ENCODE measurements at regions of chr10 and their contacts with region 1.

Region 1: DNA sequence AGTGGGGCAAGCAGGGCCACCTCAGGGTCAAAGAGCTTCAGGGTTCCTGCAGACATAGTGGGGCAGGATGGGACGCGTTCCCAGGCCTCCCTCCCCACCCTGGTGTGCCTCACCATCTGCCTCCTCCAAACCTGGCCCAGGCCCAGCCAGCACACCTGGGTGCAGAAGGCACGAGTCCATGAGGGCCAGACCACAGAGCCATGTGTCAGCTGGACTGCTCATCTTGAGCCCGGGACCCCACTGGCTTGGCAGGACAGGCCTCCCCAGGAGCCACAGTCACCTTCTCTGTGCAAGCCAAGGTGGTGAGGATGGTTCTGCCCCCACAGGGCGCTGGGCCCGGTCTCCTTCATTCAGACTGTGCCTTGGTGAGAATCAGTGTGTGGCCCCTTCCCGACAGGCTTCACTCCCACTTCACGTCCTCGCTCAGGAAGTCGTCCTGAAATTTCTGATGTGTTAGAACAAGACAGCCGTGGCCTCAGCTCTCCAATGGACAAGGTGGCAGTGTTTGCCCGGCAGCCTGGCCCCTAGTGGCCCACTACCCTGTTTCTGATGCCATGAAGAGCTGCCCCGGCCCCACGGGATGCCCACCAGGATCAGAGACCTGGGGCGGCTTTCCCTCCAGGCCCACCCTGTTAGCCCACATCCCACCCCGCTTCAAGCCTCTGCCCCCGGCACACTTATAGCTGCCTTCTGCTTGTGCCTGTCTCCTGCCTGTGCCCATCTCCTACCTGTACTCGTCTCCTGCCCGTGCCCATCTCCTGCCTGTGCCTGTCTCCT is 59.6 kb upstream of the EBF3 start:
- DNase-seq: no peak
- H3K4me3 ChIP-seq: no peak overlapping the region
- H3K27ac ChIP-seq: no peak overlapping the region
- H3K4me1 ChIP-seq: no peaks in the 10 kb centered on the region
- H3K27me3 ChIP-seq: no peaks in the 10 kb centered on the region
- CTCF ChIP-seq: no peak
- POLR2A ChIP-seq: no peak

Region 2: DNA sequence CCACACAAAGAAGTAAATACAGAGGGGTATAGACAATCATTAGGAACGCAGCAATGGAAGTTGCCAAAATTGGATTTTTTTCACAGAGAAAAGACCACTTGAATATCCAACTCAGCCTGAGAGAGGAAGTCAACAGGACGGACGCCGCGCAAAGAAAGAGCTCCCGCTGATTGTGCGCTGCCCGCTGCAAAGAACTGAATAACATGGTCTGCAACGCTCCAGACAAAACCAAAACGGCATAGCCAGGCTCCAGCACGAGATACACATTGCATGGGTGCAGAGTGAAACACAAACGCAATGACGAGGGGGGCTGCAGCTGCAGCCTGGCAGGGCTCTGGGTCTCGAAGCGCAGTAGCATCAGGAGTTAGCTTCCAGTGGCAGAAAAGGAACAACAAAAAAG is 670.5 kb before region 1 on chr10:
- CTCF ChIA-PET with region 1: no interaction called
- POLR2A ChIA-PET with region 1: no interaction called
- dilution Hi-C with region 1: no loop called
- intact Hi-C with region 1: no loop called
- DNase-seq: no peak
- H3K4me3 ChIP-seq: no peak overlapping the region
- H3K27ac ChIP-seq: no peak overlapping the region
- H3K4me1 ChIP-seq: no peaks in the 10 kb centered on the region
- H3K27me3 ChIP-seq: no peaks in the 10 kb centered on the region
- CTCF ChIP-seq: no peak
- POLR2A ChIP-seq: no peak

Region 3: DNA sequence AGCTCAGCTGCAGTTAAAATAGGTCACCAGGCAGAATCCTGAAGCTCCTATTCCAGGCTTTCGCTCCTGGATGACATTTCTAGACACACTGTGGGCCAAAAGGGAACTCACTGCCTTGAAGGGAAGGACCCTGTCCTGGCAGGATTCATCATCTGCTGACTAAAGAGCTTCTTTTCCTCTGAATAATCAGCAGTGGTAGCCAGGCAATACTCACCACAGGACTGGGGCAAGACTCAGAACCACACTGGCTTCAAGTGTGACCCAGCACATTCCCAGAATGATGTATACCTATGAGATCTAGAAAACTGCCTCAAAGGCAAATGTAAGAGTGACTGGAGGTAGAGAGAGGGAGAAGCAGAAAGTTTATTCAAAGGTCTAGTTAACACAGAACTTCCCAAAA is 30.0 kb before region 1 on chr10:
- CTCF ChIA-PET with region 1: no interaction called
- POLR2A ChIA-PET with region 1: no interaction called
- dilution Hi-C with region 1: no loop called
- intact Hi-C with region 1: loop called (anchors 1 kb)
- DNase-seq: no peak
- H3K4me3 ChIP-seq: no peak overlapping the region
- H3K27ac ChIP-seq: no peak overlapping the region
- H3K4me1 ChIP-seq: no peaks in the 10 kb centered on the region
- H3K27me3 ChIP-seq: no peaks in the 10 kb centered on the region
- CTCF ChIP-seq: no peak
- POLR2A ChIP-seq: no peak

Region 4: DNA sequence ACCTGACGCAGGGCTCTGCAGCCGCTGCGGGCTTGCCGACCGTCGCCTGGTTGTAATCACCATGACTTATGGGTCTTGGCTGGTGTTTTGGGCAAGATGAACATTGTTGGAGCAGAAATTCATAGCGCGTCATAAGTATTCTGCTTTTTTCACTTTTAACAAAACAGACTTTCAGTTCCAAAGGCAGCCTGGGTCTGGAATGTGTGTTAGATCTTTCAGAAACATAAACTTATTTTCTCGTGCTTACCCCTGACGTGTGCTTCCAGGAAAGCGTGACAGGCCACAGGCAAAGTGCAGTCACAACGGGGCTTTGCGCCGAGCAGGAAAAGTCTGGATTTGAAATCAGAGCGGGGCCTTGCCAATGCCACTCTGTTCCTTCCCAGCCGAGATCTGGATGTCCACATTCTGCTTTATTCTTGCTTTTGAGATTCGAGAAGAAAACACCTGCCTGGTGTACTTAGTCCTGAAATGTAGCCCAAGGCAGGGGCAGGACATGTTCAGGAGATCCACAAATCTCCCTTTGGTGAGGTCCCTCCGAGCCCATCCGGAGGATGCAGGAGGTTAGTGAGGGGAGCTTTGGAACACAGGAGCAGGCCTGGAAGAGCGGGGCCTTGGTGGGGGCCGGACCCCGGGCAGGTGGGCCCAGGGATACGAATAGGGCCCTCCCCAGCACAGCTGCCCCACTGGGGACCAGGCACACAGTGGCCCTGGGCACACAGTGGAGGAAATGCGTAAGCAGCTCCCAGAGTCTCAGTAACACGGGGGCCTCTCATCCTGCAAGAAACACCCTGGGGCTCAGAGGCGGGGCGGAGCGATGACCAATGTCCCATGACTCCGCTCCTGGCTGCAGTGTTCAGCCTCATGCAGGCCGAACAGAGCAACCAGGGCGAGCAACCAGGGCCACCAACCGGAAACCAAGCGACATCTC is 10.0 kb before region 1 on chr10:
- CTCF ChIA-PET with region 1: no interaction called
- POLR2A ChIA-PET with region 1: no interaction called
- dilution Hi-C with region 1: no loop called
- intact Hi-C with region 1: no loop called
- DNase-seq: no peak
- H3K4me3 ChIP-seq: no peak overlapping the region
- H3K27ac ChIP-seq: no peak overlapping the region
- H3K4me1 ChIP-seq: no peaks in the 10 kb centered on the region
- H3K27me3 ChIP-seq: no peaks in the 10 kb centered on the region
- CTCF ChIP-seq: no peak
- POLR2A ChIP-seq: no peak